ENCODE measurements at regions of chr5 and their contacts with region 1.

Region 1: GRCh38 chr5:79133657-79134451 is 22.2 kb downstream of the BHMT start:
- DNase-seq: peak; percentile 31
- H3K4me3 ChIP-seq: peak overlapping the region; percentile 52
- CTCF ChIP-seq: peak; percentile 84

Region 2: DNA sequence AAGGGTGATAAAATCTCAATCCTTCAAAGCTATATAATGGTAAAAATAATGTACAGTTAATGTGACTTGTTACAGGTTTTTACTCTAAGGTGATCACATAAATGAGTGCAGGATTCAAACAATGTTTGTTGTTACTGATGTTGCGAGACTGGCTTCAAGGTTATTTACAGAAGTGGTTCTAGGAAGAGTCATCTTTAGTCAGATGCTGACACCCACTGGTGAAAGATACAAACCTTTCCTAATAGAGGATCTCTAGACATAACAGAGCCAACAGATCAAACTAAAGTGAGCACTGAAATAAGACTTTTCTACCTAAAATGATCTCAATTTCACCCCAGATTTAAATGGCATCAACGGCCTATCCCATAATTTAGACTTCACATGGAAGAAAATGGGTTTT is 169.0 kb before region 1 on chr5:
- CTCF ChIA-PET with region 1: interaction called, 16 read pairs
- POLR2A ChIA-PET with region 1: no interaction called
- DNase-seq: no peak
- H3K4me3 ChIP-seq: no peak overlapping the region
- CTCF ChIP-seq: peak; percentile 46

Region 3: GRCh38 chr5:79011219-79011836 is 122.5 kb before region 1 on chr5:
- CTCF ChIA-PET with region 1: interaction called, 10 read pairs
- POLR2A ChIA-PET with region 1: no interaction called
- DNase-seq: peak; percentile 85
- H3K4me3 ChIP-seq: no peak overlapping the region
- CTCF ChIP-seq: peak; percentile 45

Region 4: GRCh38 chr5:79069488-79070349 is 64.1 kb before region 1 on chr5 and contains the starts of genes BHMT2 and DMGDH:
- CTCF ChIA-PET with region 1: interaction called, 13 read pairs
- POLR2A ChIA-PET with region 1: no interaction called
- DNase-seq: no peak
- H3K4me3 ChIP-seq: peak within 1 kb of the TSS; percentile 47
- CTCF ChIP-seq: no peak

Region 5: DNA sequence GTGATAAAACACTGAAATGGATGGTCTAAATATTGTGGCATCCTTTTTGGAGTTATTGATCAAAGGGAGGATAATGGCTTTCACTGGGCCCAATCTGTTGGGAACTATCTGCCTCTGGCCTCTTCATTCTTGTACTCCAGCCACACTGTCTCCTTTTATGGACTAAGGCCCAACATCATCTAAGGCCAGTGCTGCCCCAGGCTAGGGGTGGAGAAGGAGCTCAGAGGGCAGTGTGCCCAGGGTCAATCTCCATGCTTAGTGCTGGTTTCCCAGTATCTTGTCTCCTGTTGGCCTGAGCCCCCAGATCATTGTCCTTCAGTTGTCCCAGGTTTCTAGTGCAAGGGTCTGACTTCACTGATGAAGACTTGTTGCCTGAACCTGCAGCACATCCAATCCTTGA is 75.7 kb after region 1 on chr5:
- CTCF ChIA-PET with region 1: no interaction called
- POLR2A ChIA-PET with region 1: no interaction called
- DNase-seq: no peak
- H3K4me3 ChIP-seq: no peak overlapping the region
- CTCF ChIP-seq: no peak

Region 6: DNA sequence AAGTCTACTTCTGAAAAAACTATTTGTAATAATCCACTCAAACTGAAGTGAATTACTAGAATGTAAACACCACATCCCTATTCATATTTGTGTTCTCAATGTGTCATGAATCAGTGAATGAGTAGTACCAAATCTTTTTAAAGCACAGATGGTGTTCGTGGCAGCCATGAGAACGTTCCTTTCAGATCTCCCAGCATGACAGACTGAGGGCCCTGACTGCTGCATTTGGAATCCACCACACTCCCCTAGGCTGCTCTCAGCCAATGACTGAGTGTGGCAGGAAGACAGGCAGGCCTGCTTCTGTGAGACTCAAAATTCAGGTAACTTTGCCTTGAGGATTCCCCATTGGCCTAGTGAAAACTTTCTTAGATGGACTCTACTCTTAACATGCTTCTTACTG is 91.2 kb after region 1 on chr5:
- CTCF ChIA-PET with region 1: interaction called, 10 read pairs
- POLR2A ChIA-PET with region 1: no interaction called
- DNase-seq: no peak
- H3K4me3 ChIP-seq: no peak overlapping the region
- CTCF ChIP-seq: no peak

Region 7: GRCh38 chr5:79514391-79515105 is 380.7 kb after region 1 on chr5:
- CTCF ChIA-PET with region 1: interaction called, 13 read pairs
- POLR2A ChIA-PET with region 1: no interaction called
- DNase-seq: peak; percentile 63
- H3K4me3 ChIP-seq: peak overlapping the region; percentile 87
- CTCF ChIP-seq: no peak